ENCODE measurements at regions of chr7 and their contacts with region 1.

Region 1: DNA sequence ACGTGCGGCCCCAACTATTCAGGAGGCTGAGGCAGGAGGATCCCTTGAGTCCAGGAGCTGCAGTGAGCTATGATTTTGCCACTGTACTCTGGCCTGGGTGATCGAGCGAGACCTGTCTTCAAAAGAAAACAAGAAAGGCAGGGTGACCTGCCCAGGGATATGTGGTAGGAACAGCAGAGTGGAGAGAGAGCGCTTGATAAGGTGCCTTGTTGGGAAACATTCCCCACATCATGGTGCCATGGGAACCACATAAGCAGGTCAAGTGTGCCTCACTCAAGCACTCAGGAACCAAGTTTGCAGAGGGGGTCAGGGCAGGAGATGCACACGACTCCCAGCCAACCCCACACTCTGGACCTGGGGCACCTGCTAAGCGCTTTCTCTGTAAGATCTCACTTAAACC is 37.3 kb downstream of the PVRIG start:
- DNase-seq: no peak
- H3K4me3 ChIP-seq: no peak overlapping the region
- H3K27ac ChIP-seq: no peak overlapping the region
- H3K4me1 ChIP-seq: no peaks in the 10 kb centered on the region
- H3K27me3 ChIP-seq: no peaks in the 10 kb centered on the region
- CTCF ChIP-seq: no peak
- EP300 ChIP-seq: no peak
- POLR2A ChIP-seq: no peak
- RAD21 ChIP-seq: no peak

Region 2: GRCh38 chr7:100267648-100268047 is 10.6 kb after region 1 on chr7:
- CTCF ChIA-PET with region 1: interaction called, 14 read pairs
- POLR2A ChIA-PET with region 1: interaction called, 5 read pairs
- DNase-seq: no peak
- H3K4me3 ChIP-seq: no peak overlapping the region
- H3K27ac ChIP-seq: no peak overlapping the region
- H3K4me1 ChIP-seq: peaks cover 0 to 12% (median 7%) of the 10 kb centered on the region in 4 experiments; a peak in 6 of 7 replicates
- H3K27me3 ChIP-seq: no peaks in the 10 kb centered on the region
- CTCF ChIP-seq: no peak
- EP300 ChIP-seq: no peak
- POLR2A ChIP-seq: no peak
- RAD21 ChIP-seq: no peak

Region 3: GRCh38 chr7:100965723-100966541 is 708.9 kb after region 1 on chr7:
- CTCF ChIA-PET with region 1: no interaction called
- POLR2A ChIA-PET with region 1: no interaction called
- DNase-seq: peak; percentile 97 to 100
- H3K4me3 ChIP-seq: peak overlapping the region; percentile 36 to 79 (median 60)
- H3K27ac ChIP-seq: no peak overlapping the region
- H3K4me1 ChIP-seq: peaks cover 4 to 32% (median 26%) of the 10 kb centered on the region in 4 experiments
- H3K27me3 ChIP-seq: peaks cover 3 to 18% (median 14%) of the 10 kb centered on the region in 4 experiments
- CTCF ChIP-seq: peak in 2 of 3 experiments; percentile 96 to 98; a peak in 3 of 4 replicates
- EP300 ChIP-seq: peak in 1 of 2 experiments; percentile 69; a peak in 1 of 3 replicates
- POLR2A ChIP-seq: no peak
- RAD21 ChIP-seq: peak; percentile 79 to 92